ENCODE measurements at regions of chr10 and their contacts with region 1.

Region 1: DNA sequence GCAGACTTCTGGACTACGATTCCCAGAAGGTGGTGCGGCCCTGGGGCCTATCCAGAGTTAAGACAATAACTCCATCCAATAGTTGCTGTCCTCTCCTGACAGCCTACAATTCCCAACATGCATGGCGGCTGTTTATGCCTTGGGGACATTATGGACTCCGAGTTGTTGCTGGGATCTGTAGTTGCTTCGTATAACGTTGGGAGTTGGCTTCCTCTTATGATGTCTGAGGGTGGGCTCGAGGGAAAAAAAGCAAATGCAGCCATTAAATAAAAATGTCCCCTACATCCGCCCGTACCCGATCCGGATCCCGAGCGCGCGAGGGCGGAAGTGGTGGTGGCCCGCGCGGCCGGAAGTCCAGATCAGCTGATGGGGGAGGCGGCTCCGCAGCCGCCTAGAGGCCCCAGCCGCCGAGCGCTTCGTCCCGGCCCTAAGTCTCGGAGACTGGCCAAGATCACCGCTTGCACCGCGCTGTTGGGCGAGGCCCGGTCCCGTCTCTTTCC is at the start of gene ZSWIM8:
- DNase-seq: peak; percentile 95 to 99
- ATAC-seq: peak; percentile 90 to 94
- H3K4me3 ChIP-seq: peak within 1 kb of the TSS; percentile 97
- H3K27ac ChIP-seq: peak within 1 kb of the TSS; percentile 70 to 92
- H3K4me1 ChIP-seq: peaks cover 33% of the 10 kb centered on the region
- CTCF ChIP-seq: no peak
- EP300 ChIP-seq: no peak
- POLR2A ChIP-seq: peak; percentile 52
- RAD21 ChIP-seq: no peak
- polyA plus RNA-seq, gene ZSWIM8: 24.3 and 31.7 TPM in 2 replicates

Region 2: DNA sequence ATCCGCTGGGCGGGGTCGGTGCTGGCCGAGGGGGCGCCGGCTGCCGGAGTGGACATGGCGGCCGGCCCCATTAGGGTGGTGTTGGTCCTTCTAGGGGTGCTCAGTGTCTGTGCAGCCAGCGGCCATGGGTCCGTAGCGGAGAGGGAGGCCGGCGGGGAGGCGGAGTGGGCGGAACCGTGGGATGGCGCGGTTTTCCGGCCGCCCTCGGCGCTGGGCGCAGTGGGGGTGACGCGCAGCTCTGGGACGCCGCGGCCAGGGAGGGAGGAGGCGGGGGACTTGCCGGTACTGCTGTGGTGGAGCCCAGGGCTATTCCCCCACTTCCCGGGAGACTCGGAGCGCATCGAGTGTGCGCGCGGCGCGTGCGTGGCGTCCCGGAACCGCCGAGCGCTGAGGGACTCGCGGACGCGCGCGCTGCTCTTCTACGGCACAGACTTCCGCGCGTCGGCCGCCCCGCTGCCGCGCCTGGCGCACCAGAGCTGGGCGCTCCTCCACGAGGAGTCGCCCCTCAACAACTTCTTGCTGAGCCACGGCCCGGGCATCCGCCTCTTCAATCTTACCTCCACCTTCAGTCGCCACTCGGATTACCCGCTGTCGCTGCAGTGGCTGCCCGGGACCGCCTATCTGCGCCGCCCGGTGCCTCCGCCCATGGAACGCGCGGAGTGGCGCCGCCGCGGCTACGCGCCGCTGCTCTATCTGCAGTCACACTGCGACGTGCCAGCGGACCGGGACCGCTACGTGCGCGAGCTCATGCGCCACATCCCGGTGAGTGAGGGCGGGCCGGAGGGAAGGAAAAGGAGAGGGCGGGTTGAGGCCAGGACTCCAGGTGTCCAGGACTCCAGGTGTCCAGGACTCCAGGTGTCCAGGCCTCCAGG is 12.8 kb before region 1 on chr10:
- CTCF ChIA-PET with region 1: interaction called, 11 read pairs
- POLR2A ChIA-PET with region 1: interaction called, 24 read pairs
- DNase-seq: peak; percentile 69 to 79
- ATAC-seq: peak; percentile 79 to 85
- H3K4me3 ChIP-seq: peak overlapping the region; percentile 58
- H3K27ac ChIP-seq: peak overlapping the region; percentile 94 to 95
- H3K4me1 ChIP-seq: peaks cover 27% of the 10 kb centered on the region
- CTCF ChIP-seq: no peak; the same call in 2 of the 3 replicates
- EP300 ChIP-seq: no peak
- POLR2A ChIP-seq: peak; percentile 78
- RAD21 ChIP-seq: 0 out of 5 replicates have a peak, but pooled peaks of 1 of the 2 experiments have one; percentile 22

Region 3: DNA sequence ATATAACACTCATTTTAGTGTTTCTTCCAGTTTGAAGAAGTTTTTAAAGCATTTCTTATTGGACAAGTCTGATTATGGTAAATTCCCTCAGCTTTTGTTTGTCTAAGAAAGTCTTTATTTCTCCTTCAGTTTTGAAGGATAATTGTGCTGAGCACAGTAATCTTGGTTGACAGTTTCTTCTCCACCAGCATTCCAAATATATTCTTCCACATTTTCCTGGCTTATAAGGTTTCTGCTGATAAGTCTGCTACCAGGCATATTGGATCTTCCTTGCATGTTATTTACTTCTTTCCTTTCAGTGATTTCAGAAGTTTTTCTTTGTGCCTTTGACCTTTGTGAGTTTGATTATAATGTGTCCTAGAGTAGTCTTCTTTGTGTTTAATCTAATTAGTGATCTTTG is 576.4 kb after region 1 on chr10:
- CTCF ChIA-PET with region 1: no interaction called
- POLR2A ChIA-PET with region 1: no interaction called
- DNase-seq: no peak
- ATAC-seq: no peak
- H3K4me3 ChIP-seq: no peak overlapping the region
- H3K27ac ChIP-seq: no peak overlapping the region
- H3K4me1 ChIP-seq: peaks cover 20% of the 10 kb centered on the region; the same call in 2 of the 3 replicates
- CTCF ChIP-seq: no peak
- EP300 ChIP-seq: no peak
- POLR2A ChIP-seq: no peak
- RAD21 ChIP-seq: no peak